IMR-90 (cell line): ENCODE measurements at regions of chr3 and their contacts with region 1.

Region 1: DNA sequence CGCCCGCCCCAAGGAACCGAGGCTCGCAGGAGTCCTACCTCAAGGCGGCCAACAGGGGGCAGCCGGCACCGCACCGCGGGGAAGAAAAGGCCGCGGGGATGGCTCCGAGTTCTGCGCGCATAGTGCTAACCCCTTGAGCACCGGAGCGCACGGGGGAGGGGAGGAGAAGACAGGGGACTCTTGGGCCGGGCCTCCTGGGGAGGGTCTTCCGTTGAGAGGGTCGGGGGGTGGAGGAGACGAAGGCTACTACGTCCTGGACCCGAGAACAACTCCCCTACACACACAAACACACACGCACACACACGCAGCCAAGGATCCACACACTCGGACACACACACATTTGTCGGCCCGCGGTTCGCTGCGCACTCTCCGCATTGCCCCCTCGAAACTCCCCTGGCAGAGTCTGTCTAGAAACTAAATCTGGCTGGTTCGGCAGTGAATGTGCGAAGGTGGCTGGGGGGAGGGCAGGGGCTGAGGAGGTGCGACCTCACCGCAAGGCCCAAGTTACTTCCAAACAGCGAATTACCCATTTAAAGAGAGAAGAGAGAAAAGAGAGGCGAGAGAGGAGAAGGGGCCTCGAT is 1.8 kb downstream of the WNT5A start:
- DNase-seq: peak; percentile 88
- ATAC-seq: peak; percentile 40
- H3K4me3 ChIP-seq: peak overlapping the region; percentile 89
- H3K27ac ChIP-seq: peak overlapping the region; percentile 98
- H3K4me1 ChIP-seq: peaks cover 14% of the 10 kb centered on the region
- H3K27me3 ChIP-seq: no peaks in the 10 kb centered on the region
- CTCF ChIP-seq: peak; percentile 66
- POLR2A ChIP-seq: no peak; the same call in 1 of the 2 replicates
- RAD21 ChIP-seq: peak; percentile 77

Region 2: GRCh38 chr3:54427941-54428871 is 1057.1 kb before region 1 on chr3:
- CTCF ChIA-PET with region 1: no interaction called
- POLR2A ChIA-PET with region 1: no interaction called
- dilution Hi-C with region 1: no loop called
- in situ Hi-C with region 1: loop called (anchors 10 kb)
- intact Hi-C with region 1: loop called (anchors 2 kb)
- DNase-seq: peak; percentile 76
- ATAC-seq: peak; percentile 90
- H3K4me3 ChIP-seq: no peak overlapping the region
- H3K27ac ChIP-seq: no peak overlapping the region
- H3K4me1 ChIP-seq: no peaks in the 10 kb centered on the region
- H3K27me3 ChIP-seq: no peaks in the 10 kb centered on the region
- CTCF ChIP-seq: peak; percentile 88
- POLR2A ChIP-seq: no peak
- RAD21 ChIP-seq: peak; percentile 83

Region 3: GRCh38 chr3:54951405-54951804 is 533.9 kb before region 1 on chr3:
- CTCF ChIA-PET with region 1: no interaction called
- POLR2A ChIA-PET with region 1: no interaction called
- dilution Hi-C with region 1: no loop called
- in situ Hi-C with region 1: loop called (anchors 5 kb)
- intact Hi-C with region 1: loop called (anchors 1 kb)
- DNase-seq: peak; percentile 93
- ATAC-seq: peak; percentile 89
- H3K4me3 ChIP-seq: no peak overlapping the region
- H3K27ac ChIP-seq: peak overlapping the region; percentile 29
- H3K4me1 ChIP-seq: peaks cover 18% of the 10 kb centered on the region
- H3K27me3 ChIP-seq: no peaks in the 10 kb centered on the region
- CTCF ChIP-seq: peak; percentile 92
- POLR2A ChIP-seq: peak; percentile 53; the same call in 1 of the 2 replicates
- RAD21 ChIP-seq: peak; percentile 99

Region 4: DNA sequence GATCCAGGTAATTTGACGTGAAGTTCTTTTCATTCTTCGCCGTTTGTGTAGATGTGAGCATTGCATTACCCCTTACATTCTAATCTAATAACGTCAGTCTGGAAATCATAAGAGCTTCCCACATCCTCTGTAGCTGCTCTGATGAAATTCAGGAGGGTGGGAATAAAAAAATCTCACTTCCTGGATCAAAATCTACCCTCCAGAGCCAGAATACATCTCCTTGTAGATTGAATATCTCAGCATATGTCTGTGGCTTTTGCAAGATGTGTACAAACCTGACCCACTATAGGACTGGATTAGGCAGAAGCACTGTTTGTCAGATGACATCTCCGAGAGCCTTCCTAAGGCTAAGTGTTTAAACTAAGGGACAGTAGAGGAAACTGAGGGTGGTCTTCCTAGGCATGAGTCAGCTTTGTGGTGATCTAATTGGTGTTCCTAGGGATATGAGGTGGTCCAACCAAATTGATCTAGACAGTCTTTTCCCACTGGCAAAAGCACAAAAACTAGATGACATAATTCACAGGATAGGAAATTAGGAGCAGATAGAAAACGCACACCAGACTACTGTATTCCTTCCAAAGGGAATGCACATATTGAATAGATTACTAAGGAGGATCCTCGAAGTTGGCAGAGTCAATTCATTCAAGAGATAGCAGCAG is 341.2 kb before region 1 on chr3:
- CTCF ChIA-PET with region 1: no interaction called
- POLR2A ChIA-PET with region 1: no interaction called
- dilution Hi-C with region 1: no loop called
- in situ Hi-C with region 1: no loop called
- intact Hi-C with region 1: no loop called
- DNase-seq: peak; percentile 54
- ATAC-seq: no peak
- H3K4me3 ChIP-seq: no peak overlapping the region
- H3K27ac ChIP-seq: no peak overlapping the region
- H3K4me1 ChIP-seq: peaks cover 8% of the 10 kb centered on the region
- H3K27me3 ChIP-seq: no peaks in the 10 kb centered on the region
- CTCF ChIP-seq: no peak
- POLR2A ChIP-seq: no peak
- RAD21 ChIP-seq: no peak

Region 5: GRCh38 chr3:55282994-55283393 is 202.3 kb before region 1 on chr3:
- CTCF ChIA-PET with region 1: interaction called, 10 read pairs
- POLR2A ChIA-PET with region 1: no interaction called
- dilution Hi-C with region 1: no loop called
- in situ Hi-C with region 1: no loop called
- intact Hi-C with region 1: no loop called
- DNase-seq: no peak
- ATAC-seq: no peak
- H3K4me3 ChIP-seq: no peak overlapping the region
- H3K27ac ChIP-seq: no peak overlapping the region
- H3K4me1 ChIP-seq: peaks cover 21% of the 10 kb centered on the region
- H3K27me3 ChIP-seq: no peaks in the 10 kb centered on the region
- CTCF ChIP-seq: no peak
- POLR2A ChIP-seq: no peak
- RAD21 ChIP-seq: no peak

Region 6: DNA sequence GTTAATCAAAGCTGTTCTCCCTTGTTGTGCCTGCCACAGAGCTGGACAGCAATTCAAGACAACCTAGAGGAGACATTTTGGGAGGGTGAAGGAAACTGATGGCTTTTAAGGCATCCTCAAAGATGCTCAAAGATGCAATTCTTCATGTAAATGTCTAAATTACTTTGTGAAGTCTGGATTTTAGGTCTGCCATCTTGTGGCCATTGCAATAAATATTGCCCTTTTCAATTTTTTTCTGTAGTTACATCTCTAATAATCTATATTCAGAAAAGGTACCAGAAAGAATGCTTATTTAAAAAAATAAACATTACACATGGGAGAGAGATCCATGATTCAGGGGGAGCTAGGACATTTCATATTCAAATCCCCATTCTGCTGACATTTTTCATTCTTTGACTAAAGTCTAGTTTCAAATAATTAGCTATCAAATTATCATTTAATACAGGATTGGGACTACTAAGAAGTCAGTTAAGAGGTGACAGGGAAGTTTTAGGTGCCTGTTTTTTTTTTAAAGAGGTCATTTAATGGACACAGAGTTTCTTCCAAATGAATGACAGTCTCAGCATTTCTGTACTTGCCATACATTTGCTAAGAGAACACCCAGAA is 261.6 kb after region 1 on chr3:
- CTCF ChIA-PET with region 1: no interaction called
- POLR2A ChIA-PET with region 1: interaction called, 3 read pairs
- dilution Hi-C with region 1: no loop called
- in situ Hi-C with region 1: no loop called
- intact Hi-C with region 1: loop called (anchors 1 kb)
- DNase-seq: peak; percentile 17
- ATAC-seq: no peak
- H3K4me3 ChIP-seq: no peak overlapping the region
- H3K27ac ChIP-seq: no peak overlapping the region
- H3K4me1 ChIP-seq: peaks cover 8% of the 10 kb centered on the region
- H3K27me3 ChIP-seq: no peaks in the 10 kb centered on the region
- CTCF ChIP-seq: peak; percentile 52
- POLR2A ChIP-seq: no peak
- RAD21 ChIP-seq: peak; percentile 47

Region 7: DNA sequence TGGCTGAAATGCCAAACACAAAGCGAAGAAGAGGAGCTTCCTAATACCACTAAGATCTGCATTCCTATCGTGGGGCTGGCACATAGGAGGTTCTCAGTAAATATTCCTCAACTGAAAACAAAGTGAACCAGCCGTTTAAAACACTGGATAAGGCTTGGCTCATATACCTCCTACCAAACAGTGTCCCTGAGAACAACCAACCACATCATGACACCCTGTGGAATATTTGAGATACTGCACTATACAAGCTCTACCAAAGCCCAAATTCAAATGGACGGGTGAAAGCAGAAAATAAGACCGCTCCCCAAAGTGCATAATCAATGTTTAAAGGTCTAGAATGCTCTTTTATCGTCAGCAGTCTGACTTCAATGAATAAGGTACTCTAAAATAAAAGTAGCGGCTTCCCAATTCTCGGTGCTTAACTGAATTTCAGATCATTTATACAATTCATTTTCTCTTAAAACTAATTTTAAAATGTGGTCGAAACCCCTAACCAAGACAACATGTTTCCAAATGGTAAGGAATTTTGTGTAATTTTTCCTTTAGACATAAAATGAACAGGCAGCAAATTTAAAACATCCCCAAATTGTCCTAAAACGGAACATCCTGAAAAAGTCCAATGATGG is 557.1 kb after region 1 on chr3:
- CTCF ChIA-PET with region 1: no interaction called
- POLR2A ChIA-PET with region 1: no interaction called
- dilution Hi-C with region 1: no loop called
- in situ Hi-C with region 1: loop called (anchors 10 kb)
- intact Hi-C with region 1: loop called (anchors 1 kb)
- DNase-seq: peak; percentile 61
- ATAC-seq: peak; percentile 97
- H3K4me3 ChIP-seq: no peak overlapping the region
- H3K27ac ChIP-seq: no peak overlapping the region
- H3K4me1 ChIP-seq: no peaks in the 10 kb centered on the region
- H3K27me3 ChIP-seq: peaks cover 6% of the 10 kb centered on the region
- CTCF ChIP-seq: peak; percentile 58
- POLR2A ChIP-seq: no peak
- RAD21 ChIP-seq: peak; percentile 66